ENCODE measurements at regions of chr7 and their contacts with region 1.

Region 1: DNA sequence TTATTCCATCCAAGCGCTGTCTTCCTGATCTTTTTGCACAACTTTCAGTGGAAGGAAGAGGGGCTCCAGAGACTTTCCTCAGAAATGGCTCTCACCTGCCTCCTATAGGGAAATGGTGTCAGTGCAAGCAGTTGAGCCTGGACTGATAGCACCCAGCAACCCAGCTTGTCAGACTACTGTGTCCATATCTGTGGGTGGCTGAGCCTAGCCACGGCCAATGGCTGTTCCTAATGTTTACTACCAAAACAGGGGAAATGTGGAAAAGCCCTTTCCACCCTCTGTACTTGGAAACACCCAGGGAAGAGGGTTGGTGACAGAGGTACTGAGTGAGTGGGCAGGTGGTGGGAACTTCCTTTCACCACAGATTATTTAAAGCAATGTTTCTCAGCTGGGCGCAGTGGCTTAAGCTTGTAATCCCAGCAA is 4.3 kb upstream of the YKT6 start:
- DNase-seq: peak; percentile 54
- ATAC-seq: peak; percentile 77
- H3K4me3 ChIP-seq: no peak overlapping the region
- H3K27ac ChIP-seq: no peak overlapping the region
- H3K4me1 ChIP-seq: no peaks in the 10 kb centered on the region
- H3K27me3 ChIP-seq: peaks cover 10% of the 10 kb centered on the region; the same call in 1 of the 2 replicates
- CTCF ChIP-seq: peak; percentile 92
- POLR2A ChIP-seq: no peak
- RAD21 ChIP-seq: peak; percentile 94

Region 2: DNA sequence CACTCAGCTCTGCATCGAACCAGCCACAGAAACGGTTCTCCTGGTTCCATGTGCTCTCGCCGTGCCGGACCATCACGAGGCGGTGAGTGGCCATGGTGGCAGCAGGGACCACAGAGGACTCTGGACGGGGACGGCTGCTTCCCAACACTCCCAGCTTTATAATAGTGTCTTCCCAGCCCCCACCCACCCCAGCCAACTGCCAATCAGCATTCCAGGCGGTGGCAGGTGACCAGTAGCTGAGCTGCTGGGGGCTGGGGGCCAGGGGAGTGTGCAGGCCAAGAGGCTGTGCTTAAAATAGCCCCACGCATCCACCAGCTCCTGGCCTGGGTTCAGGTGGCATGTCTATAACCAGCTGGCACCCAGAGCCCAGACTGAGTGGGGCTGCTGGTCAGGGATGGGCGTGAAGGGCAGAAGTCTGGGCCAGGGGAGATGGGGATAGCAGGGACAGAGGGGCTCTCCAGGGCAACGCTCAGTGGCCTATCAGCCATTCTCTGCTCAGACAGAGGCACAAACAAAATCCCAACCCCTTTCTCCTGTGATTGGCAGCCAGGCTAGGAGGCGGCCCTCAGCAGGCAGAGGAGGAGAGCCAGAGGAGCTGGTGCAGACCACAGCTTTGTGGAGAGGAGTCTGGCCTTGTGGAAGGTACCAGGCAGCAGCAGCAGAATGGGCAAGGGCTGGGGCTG is 130.9 kb before region 1 on chr7 and contains the start of gene PGAM2:
- CTCF ChIA-PET with region 1: no interaction called
- POLR2A ChIA-PET with region 1: no interaction called
- dilution Hi-C with region 1: no loop called
- in situ Hi-C with region 1: loop called (anchors 5 kb)
- intact Hi-C with region 1: no loop called
- DNase-seq: no peak
- ATAC-seq: peak; percentile 53
- H3K4me3 ChIP-seq: no peak within 1 kb of the TSS
- H3K27ac ChIP-seq: no peak within 1 kb of the TSS
- H3K4me1 ChIP-seq: peaks cover 9% of the 10 kb centered on the region
- H3K27me3 ChIP-seq: no peaks in the 10 kb centered on the region
- CTCF ChIP-seq: no peak
- POLR2A ChIP-seq: no peak; the same call in none of the 2 replicates
- RAD21 ChIP-seq: no peak
- total RNA-seq, gene PGAM2: not detected in 2 replicates

Region 3: DNA sequence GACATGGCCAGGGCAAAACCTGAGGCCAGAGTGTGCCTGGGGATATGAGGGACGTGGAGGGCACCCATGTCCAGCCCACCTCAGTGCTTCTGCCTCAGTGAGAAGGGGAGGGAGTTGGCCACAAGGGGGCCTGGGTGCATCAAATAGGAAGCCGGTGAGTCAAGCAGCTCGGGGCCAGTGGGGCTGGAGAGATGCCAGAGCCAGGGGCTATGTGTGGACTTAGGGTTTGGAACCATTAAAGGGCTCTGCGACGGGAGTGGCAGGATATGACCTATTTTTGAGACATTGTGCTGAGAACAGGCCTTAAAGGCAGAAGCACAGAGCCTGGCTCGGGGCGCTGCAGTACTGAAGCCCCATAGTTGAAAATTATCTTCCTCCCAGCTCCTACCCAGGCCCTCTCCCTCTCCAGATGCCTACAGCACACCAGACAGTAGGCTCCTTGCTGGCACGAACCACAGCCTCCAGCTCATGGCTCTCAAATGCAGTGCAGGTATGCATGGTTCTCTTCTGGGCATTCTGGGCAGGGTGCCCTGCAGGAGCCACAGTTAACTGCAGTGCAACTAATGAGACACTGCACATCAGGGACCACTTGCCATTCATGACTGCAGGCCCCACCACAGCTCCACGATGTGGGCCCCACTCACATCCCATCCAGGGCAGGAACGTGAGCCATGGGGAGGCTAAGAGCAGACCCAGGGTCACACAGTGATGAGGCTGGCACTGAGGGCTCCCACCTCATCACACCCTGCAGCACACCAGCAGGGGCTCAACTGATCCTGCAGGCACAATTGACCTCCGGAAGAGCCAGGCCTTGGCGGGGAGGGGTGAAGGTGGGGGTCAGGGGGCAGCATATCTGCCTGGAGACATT is 123.9 kb before region 1 on chr7:
- CTCF ChIA-PET with region 1: interaction called, 8 read pairs
- POLR2A ChIA-PET with region 1: interaction called, 3 read pairs
- dilution Hi-C with region 1: no loop called
- in situ Hi-C with region 1: loop called (anchors 5 kb)
- intact Hi-C with region 1: loop called (anchors 1 kb)
- DNase-seq: peak; percentile 84
- ATAC-seq: peak; percentile 80
- H3K4me3 ChIP-seq: no peak overlapping the region
- H3K27ac ChIP-seq: no peak overlapping the region
- H3K4me1 ChIP-seq: peaks cover 12% of the 10 kb centered on the region
- H3K27me3 ChIP-seq: no peaks in the 10 kb centered on the region
- CTCF ChIP-seq: peak; percentile 88
- POLR2A ChIP-seq: peak; percentile 60; the same call in 1 of the 2 replicates
- RAD21 ChIP-seq: peak; percentile 82

Region 4: DNA sequence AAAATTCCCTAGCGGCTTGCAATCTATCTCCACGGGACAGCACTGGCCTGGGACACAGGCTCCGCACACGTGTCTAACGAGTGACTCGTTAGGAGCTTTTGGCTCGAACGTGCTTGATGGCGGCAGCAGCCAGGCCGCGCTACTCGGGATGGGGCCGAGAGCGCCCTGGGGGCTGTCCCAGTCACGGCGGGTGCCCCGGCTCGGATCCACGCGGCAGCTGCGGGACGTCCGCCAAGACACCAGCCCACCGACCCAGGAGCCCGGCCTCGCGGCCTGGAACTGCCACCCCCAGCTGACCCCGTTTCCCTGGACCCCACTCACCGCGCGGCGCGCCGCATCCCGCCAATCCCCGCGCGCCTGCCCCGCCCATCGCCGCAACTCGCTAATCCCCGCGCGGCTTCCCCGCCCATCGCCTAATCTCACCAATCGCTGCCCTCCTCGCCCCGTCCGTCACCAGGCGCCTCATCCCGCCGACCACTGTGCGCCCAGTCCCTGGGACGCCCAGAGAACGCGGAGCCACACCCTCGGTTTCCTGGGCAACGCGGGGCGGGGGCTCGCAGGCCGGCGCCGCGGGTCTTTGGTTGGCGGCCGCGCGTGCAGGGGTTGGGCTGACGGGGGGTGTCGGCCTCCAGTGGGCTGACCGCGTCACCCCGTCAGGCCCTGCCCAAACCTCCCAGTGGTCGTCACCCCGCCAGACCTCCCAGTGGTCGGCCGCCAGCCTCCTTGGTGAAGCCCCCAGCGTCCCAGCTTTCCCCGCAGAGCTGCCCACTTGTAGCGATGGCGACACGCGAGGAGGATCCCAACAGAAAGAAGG is 73.1 kb before region 1 on chr7 and contains the start of gene POLD2:
- CTCF ChIA-PET with region 1: interaction called, 3 read pairs
- POLR2A ChIA-PET with region 1: no interaction called
- dilution Hi-C with region 1: no loop called
- in situ Hi-C with region 1: loop called (anchors 10 kb)
- intact Hi-C with region 1: no loop called
- DNase-seq: peak; percentile 92
- ATAC-seq: peak; percentile 100
- H3K4me3 ChIP-seq: peak within 1 kb of the TSS; percentile 92
- H3K27ac ChIP-seq: peak within 1 kb of the TSS; percentile 62
- H3K4me1 ChIP-seq: peaks cover 6% of the 10 kb centered on the region
- H3K27me3 ChIP-seq: no peaks in the 10 kb centered on the region
- CTCF ChIP-seq: no peak
- POLR2A ChIP-seq: peak; percentile 61
- RAD21 ChIP-seq: no peak; the same call in 1 of the 2 replicates
- total RNA-seq, gene POLD2: 136 and 163 TPM in 2 replicates

Region 5: GRCh38 chr7:44131173-44132029 is 65.1 kb before region 1 on chr7:
- CTCF ChIA-PET with region 1: interaction called, 4 read pairs
- POLR2A ChIA-PET with region 1: no interaction called
- dilution Hi-C with region 1: no loop called
- in situ Hi-C with region 1: loop called (anchors 10 kb)
- intact Hi-C with region 1: loop called (anchors 1 kb)
- DNase-seq: no peak
- ATAC-seq: peak; percentile 64
- H3K4me3 ChIP-seq: no peak overlapping the region
- H3K27ac ChIP-seq: no peak overlapping the region
- H3K4me1 ChIP-seq: peaks cover 10% of the 10 kb centered on the region
- H3K27me3 ChIP-seq: no peaks in the 10 kb centered on the region
- CTCF ChIP-seq: 0 out of 2 replicates have a peak, but pooled peaks have one; percentile 29
- POLR2A ChIP-seq: no peak
- RAD21 ChIP-seq: peak; percentile 38

Measured in IMR-90 (cell line).